Dendritic cell treated with granulocyte-macrophage colony-stimulating factor and Interleukin-4, amounts not matched to agents 40 ng/mL and 50 ng/mL, for 4 days (primary cell): ENCODE measurements at regions of chr7 and their contacts with region 1.

Region 1: GRCh38 chr7:39095875-39096619 is 118.3 kb downstream of the POU6F2 start:
- H3K4me3 Mint-ChIP-seq: no peak overlapping the region
- H3K27ac Mint-ChIP-seq: no peak overlapping the region
- H3K4me1 Mint-ChIP-seq: no peaks in the 10 kb centered on the region
- H3K27me3 Mint-ChIP-seq: no peaks in the 10 kb centered on the region

Region 2: GRCh38 chr7:38296059-38296857 is 799.8 kb before region 1 on chr7:
- intact Hi-C with region 1: no loop called
- H3K4me3 Mint-ChIP-seq: no peak overlapping the region
- H3K27ac Mint-ChIP-seq: no peak overlapping the region
- H3K4me1 Mint-ChIP-seq: peaks cover 9% of the 10 kb centered on the region
- H3K27me3 Mint-ChIP-seq: peaks cover 6% of the 10 kb centered on the region

Region 3: DNA sequence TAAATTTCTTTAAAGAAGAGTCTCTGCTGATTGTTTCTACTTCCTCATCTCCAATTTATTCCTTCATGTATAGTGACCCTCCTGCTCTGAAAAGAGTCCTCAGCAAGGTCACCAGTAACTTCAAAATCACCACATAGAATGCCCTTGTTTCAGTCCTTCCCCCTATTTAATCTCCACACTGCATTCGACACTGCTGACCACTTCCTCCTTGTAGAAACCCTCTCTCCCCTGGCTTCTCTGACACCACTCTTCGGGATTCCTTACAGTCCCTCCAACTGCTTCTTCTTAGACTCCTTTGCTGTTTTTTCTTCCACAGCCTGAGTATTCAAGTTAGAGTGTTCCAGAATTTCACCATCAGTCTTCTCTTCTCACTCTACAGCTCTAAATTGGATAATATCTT is 276.6 kb before region 1 on chr7:
- intact Hi-C with region 1: loop called (anchors 10 kb)
- H3K4me3 Mint-ChIP-seq: no peak overlapping the region
- H3K27ac Mint-ChIP-seq: no peak overlapping the region
- H3K4me1 Mint-ChIP-seq: no peaks in the 10 kb centered on the region
- H3K27me3 Mint-ChIP-seq: no peaks in the 10 kb centered on the region

Region 4: DNA sequence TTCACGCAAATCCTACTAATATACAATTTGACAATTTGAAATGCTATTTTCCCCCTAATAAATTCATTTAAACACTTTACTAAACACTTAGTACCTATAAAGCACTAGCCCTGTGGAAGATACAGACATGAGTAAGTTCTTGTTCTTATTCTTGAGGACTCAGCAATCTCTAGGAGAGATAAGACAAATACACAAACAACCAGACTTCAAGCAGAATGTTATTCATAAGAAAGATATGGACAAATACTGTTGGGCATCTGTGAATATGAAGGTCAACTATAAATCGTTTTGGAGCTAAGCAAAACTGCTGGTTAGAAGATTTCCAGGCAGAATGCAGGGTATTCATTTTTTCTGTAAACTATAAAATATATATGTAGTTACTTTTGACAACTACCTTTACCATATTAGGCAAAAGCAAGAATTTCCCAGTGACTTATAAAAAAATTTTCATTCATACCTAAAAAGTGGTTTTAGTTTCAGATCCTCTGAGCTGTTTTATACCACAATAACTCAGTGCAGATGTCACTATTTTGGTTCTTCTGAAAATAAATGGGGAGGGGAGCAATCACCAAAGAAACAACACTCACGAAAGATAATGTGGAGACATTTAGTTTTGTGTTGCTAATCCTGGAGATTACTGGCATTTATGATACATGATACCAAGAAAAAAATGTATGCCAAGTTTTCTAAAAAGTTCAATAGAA is 190.8 kb before region 1 on chr7:
- intact Hi-C with region 1: no loop called
- H3K4me3 Mint-ChIP-seq: no peak overlapping the region
- H3K27ac Mint-ChIP-seq: no peak overlapping the region
- H3K4me1 Mint-ChIP-seq: peaks cover 58% of the 10 kb centered on the region
- H3K27me3 Mint-ChIP-seq: no peaks in the 10 kb centered on the region